Common myeloid progenitor, CD34-positive (primary cell): ENCODE measurements at regions of chr22 and their contacts with region 1.

Region 1: DNA sequence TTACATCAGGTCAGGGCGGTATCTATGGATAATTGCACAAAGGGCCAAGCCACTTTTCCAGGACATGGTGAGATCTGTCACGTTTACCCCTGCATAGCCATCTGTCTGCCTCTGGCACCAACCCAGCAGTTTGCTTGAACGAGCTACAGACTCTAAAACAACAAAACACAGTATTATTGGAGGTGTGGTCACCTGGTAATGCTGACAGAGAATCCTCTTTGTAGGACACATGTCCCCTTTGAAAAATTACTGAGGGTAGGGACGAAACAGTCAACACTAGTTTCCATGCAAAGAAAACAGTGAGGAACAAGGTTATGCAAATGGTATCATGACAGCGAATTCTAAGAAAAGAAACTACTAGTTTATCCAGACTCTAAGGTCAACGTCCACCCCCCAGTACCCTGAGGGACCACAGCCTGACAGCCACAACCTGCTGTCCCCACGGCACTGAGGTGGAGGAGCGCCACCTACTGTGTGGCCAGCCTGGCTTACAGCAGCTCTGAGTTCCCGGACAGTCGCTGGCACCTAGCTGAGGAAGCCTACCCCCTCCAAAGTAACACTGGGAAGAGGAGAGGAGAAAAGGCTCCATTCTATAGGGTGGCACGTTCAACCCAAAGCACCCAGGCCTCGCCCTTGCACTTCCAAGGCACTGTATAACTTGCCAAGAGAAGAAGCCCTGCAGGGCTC is 117.4 kb upstream of the BID start:
- DNase-seq: no peak
- H3K4me3 ChIP-seq: no peak overlapping the region
- H3K27ac ChIP-seq: no peak overlapping the region
- H3K4me1 ChIP-seq: no peaks in the 10 kb centered on the region
- H3K27me3 ChIP-seq: no peaks in the 10 kb centered on the region

Region 2: GRCh38 chr22:17872471-17872870 is 19.2 kb before region 1 on chr22:
- CTCF ChIA-PET with region 1: no interaction called
- POLR2A ChIA-PET with region 1: no interaction called
- DNase-seq: no peak
- H3K4me3 ChIP-seq: no peak overlapping the region
- H3K27ac ChIP-seq: no peak overlapping the region
- H3K4me1 ChIP-seq: peaks cover 0 to 3% (median 1%) of the 10 kb centered on the region in 4 experiments
- H3K27me3 ChIP-seq: no peaks in the 10 kb centered on the region

Region 3: DNA sequence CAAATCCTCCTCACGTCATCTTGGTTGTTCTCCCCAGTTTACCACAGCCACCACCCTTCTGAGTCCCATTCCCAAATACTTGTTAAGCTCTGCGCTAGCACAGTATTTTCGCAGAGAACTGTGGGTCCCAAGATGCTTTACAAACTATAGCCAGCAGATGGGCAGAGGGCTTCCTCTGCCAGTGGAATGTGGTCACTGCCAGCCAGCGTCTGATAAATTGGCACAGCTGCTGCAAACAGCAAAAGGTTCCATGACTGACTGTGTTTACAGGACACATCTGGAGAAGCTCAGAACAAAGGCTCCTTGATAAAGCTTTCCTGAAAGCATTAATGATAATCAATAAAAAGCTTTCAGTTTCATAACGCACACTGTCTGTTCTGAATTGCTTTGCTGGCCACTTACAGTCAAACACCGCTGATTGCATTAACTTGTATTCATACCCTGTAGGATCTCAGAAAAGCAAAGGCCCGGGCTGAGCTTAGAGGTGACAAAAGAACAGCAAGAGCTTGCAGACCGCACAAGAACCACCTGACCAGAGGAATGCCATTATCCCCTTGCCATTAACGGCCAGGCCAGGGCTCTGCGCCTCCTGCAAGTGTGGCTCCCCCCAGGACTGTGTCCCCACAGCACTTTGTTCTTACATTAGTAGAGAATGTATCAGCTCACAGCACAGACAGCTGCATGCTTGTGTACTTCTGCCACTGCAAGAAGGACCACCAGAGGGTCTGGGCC is 12.1 kb after region 1 on chr22:
- CTCF ChIA-PET with region 1: interaction called, 11 read pairs
- POLR2A ChIA-PET with region 1: no interaction called
- DNase-seq: peak in 1 of 3 donors; percentile 16
- H3K4me3 ChIP-seq: no peak overlapping the region
- H3K27ac ChIP-seq: no peak overlapping the region
- H3K4me1 ChIP-seq: no peaks in the 10 kb centered on the region
- H3K27me3 ChIP-seq: no peaks in the 10 kb centered on the region

Region 4: GRCh38 chr22:17972385-17973181 is 81.0 kb after region 1 on chr22:
- CTCF ChIA-PET with region 1: no interaction called
- POLR2A ChIA-PET with region 1: no interaction called
- DNase-seq: no peak
- H3K4me3 ChIP-seq: no peak overlapping the region
- H3K27ac ChIP-seq: no peak overlapping the region
- H3K4me1 ChIP-seq: peaks cover 0 to 4% (median 0%) of the 10 kb centered on the region in 4 experiments
- H3K27me3 ChIP-seq: no peaks in the 10 kb centered on the region